Activated CD8-positive, alpha-beta memory T cell treated with anti-CD3 and anti-CD28 coated beads, Interleukin-2, amount 10 ng/mL, durations not matched to agents 7 days and 5 days (primary cell): ENCODE measurements at regions of chr17 and their contacts with region 1.

Region 1: DNA sequence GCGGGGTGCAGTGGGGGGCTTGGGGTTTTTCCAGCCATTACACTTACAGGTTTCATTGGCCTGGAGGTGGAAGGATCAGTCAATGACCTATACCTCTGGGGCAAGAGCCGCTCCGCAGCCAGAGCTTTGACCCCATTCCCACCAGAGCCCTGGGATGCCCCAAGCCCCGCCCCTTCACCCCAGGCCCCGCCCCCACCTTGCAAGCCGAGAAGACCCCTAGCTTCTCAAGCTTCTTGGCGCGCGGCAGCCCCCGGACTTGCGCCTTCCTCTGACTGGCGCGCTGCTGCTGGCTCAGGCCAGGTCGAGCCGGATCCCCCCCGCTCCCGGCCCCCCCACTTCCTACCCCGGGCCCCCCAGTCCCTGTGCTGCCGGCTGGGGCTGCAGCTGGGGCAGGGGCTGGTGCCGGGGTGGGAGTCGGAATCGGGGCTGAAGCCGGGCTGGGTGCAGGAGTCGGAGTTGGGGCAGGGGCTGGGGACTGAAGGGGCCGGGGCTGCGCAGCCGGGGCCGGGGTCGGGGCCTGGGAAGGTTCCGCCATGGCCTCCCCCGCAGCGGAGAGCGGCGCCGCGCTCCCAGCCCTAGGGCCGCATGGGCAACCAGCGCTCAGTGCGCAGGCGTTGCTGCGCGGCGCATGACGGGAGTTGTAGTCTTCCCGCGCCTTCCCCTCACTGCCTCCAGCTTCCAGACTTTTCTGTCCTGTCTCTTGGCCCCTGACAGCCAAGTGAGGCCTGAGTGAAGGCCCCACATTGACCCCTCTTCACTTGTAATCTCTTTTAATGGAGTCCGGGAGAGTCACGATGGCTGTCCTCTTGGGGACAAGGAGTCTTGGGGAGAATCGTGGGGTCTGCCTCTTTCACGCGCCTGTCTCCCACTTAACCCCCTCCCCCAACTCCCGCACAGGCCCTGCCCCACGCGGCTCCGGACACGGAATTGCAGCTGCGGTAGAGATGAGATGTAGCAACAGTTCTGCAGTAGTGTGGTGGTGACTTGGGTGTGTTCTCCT is at the start of gene KAT2A:
- DNase-seq: peak; percentile 84
- ATAC-seq: peak; percentile 93
- H3K4me3 Mint-ChIP-seq: peak within 1 kb of the TSS; percentile 67
- H3K27ac Mint-ChIP-seq: peak within 1 kb of the TSS; percentile 69
- H3K4me1 Mint-ChIP-seq: peaks cover 34% of the 10 kb centered on the region
- H3K27me3 Mint-ChIP-seq: no peaks in the 10 kb centered on the region
- total RNA-seq, gene KAT2A: 49.0 to 58.2 TPM

Region 2: GRCh38 chr17:42027961-42028790 is 92.9 kb before region 1 on chr17:
- CTCF ChIA-PET with region 1: interaction called, 103 read pairs
- DNase-seq: no peak
- ATAC-seq: no peak
- H3K4me3 Mint-ChIP-seq: no peak overlapping the region
- H3K27ac Mint-ChIP-seq: no peak overlapping the region
- H3K4me1 Mint-ChIP-seq: peaks cover 4% of the 10 kb centered on the region
- H3K27me3 Mint-ChIP-seq: peaks cover 4% of the 10 kb centered on the region

Region 3: GRCh38 chr17:42200702-42201101 is 79.6 kb after region 1 on chr17:
- CTCF ChIA-PET with region 1: no interaction called
- DNase-seq: no peak
- ATAC-seq: no peak
- H3K4me3 Mint-ChIP-seq: no peak overlapping the region
- H3K27ac Mint-ChIP-seq: no peak overlapping the region
- H3K4me1 Mint-ChIP-seq: no peaks in the 10 kb centered on the region
- H3K27me3 Mint-ChIP-seq: no peaks in the 10 kb centered on the region